Activated CD4-positive, alpha-beta T cell treated with anti-CD3 and anti-CD28 coated beads for 36 hours (primary cell): ENCODE measurements at regions of chr1 and their contacts with region 1.

Region 1: GRCh38 chr1:151156515-151156819 is at the start of gene TNFAIP8L2:
- DNase-seq: peak; percentile 91
- ATAC-seq: peak; percentile 85
- H3K4me3 Mint-ChIP-seq: peak within 1 kb of the TSS; percentile 88
- H3K27ac Mint-ChIP-seq: peak within 1 kb of the TSS; percentile 99
- H3K4me1 Mint-ChIP-seq: peaks cover 44% of the 10 kb centered on the region
- H3K27me3 Mint-ChIP-seq: no peaks in the 10 kb centered on the region
- total RNA-seq, gene TNFAIP8L2: 18.4 to 19.2 TPM

Region 2: DNA sequence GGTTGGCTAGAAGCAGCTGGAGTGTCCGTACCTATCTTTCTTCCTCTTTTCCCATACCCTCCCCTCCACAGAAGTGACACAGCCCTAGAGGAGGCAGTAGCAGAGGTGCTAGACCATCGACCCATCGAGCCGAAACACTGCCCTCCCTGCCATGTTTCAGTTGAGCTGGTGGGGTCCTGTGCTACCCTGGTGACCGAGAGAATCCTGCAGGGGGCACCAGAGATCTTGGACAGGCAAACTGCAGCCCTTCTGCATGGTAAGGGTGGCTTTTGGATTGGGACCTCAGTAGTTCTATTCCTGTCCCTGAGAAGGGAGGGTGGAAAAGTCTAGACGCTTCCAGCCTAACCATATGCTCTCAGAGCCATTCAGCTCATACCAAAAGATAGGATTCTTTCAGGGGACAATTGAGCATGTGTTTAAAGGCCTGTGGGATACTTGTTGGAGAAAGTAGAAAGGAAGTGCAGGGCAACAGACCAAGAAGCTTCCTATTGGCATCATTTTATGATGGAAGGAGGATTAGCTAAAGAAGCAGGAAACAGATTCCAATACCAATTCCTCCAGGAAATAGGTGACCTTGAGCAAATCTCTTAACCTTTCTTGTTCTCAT is 131.8 kb before region 1 on chr1:
- CTCF ChIA-PET with region 1: interaction called, 19 read pairs
- POLR2A ChIA-PET with region 1: no interaction called
- intact Hi-C with region 1: loop called (anchors 1 kb)
- DNase-seq: peak; percentile 91
- ATAC-seq: peak; percentile 100
- H3K4me3 Mint-ChIP-seq: peak overlapping the region; percentile 30
- H3K27ac Mint-ChIP-seq: peak overlapping the region; percentile 65
- H3K4me1 Mint-ChIP-seq: peaks cover 5% of the 10 kb centered on the region
- H3K27me3 Mint-ChIP-seq: no peaks in the 10 kb centered on the region

Region 3: GRCh38 chr1:151098126-151098525 is 58.3 kb before region 1 on chr1:
- CTCF ChIA-PET with region 1: interaction called, 195 read pairs
- POLR2A ChIA-PET with region 1: interaction called, 17 read pairs
- intact Hi-C with region 1: loop called (anchors 1 kb)
- DNase-seq: no peak
- ATAC-seq: no peak
- H3K4me3 Mint-ChIP-seq: no peak overlapping the region
- H3K27ac Mint-ChIP-seq: no peak overlapping the region
- H3K4me1 Mint-ChIP-seq: no peaks in the 10 kb centered on the region
- H3K27me3 Mint-ChIP-seq: no peaks in the 10 kb centered on the region

Region 4: GRCh38 chr1:151130987-151131586 is 25.4 kb before region 1 on chr1:
- CTCF ChIA-PET with region 1: interaction called, 14 read pairs
- POLR2A ChIA-PET with region 1: interaction called, 7 read pairs
- intact Hi-C with region 1: loop called in 1 of 2 experiments (anchors 1 kb)
- DNase-seq: peak; percentile 93
- ATAC-seq: peak; percentile 100
- H3K4me3 Mint-ChIP-seq: peak overlapping the region; percentile 68
- H3K27ac Mint-ChIP-seq: peak overlapping the region; percentile 76
- H3K4me1 Mint-ChIP-seq: peaks cover 14% of the 10 kb centered on the region
- H3K27me3 Mint-ChIP-seq: no peaks in the 10 kb centered on the region